Transverse colon (tissue), 4 donors: ENCODE measurements at regions of chr3 and their contacts with region 1.

Region 1: GRCh38 chr3:150183678-150184425 is 213.2 kb upstream of the PFN2 start:
- DNase-seq: peak; percentile 53
- H3K4me3 ChIP-seq: peak overlapping the region in 2 of 4 donors; percentile 10 to 47
- H3K27ac ChIP-seq: no peak overlapping the region
- H3K4me1 ChIP-seq: peaks cover 3 to 28% (median 12%) of the 10 kb centered on the region in 4 donors
- H3K27me3 ChIP-seq: no peaks in the 10 kb centered on the region
- CTCF ChIP-seq: peak; percentile 41 to 53 (median 47)
- EP300 ChIP-seq: no peak
- POLR2A ChIP-seq: no peak

Region 2: GRCh38 chr3:149958171-149958796 is 225.6 kb before region 1 on chr3:
- in situ Hi-C with region 1: loop called in 2 of 4 experiments (anchors 10 to 25 kb)
- intact Hi-C with region 1: no loop called
- DNase-seq: no peak
- H3K4me3 ChIP-seq: no peak overlapping the region
- H3K27ac ChIP-seq: peak overlapping the region in 2 of 4 donors; percentile 4 to 44
- H3K4me1 ChIP-seq: peaks cover 0 to 18% (median 8%) of the 10 kb centered on the region in 4 donors
- H3K27me3 ChIP-seq: no peaks in the 10 kb centered on the region
- CTCF ChIP-seq: no peak
- EP300 ChIP-seq: no peak
- POLR2A ChIP-seq: no peak

Region 3: GRCh38 chr3:149969940-149970715 is 213.7 kb before region 1 on chr3:
- in situ Hi-C with region 1: loop called in 3 of 4 experiments (anchors 25 kb)
- intact Hi-C with region 1: loop called (anchors 2 kb)
- DNase-seq: peak; percentile 92
- H3K4me3 ChIP-seq: peak overlapping the region; percentile 48 to 98 (median 92)
- H3K27ac ChIP-seq: peak overlapping the region; percentile 89 to 98 (median 94)
- H3K4me1 ChIP-seq: peaks cover 0 to 33% (median 22%) of the 10 kb centered on the region in 4 donors
- H3K27me3 ChIP-seq: peaks cover 3% of the 10 kb centered on the region
- CTCF ChIP-seq: no peak
- EP300 ChIP-seq: no peak
- POLR2A ChIP-seq: peak; percentile 7

Region 4: DNA sequence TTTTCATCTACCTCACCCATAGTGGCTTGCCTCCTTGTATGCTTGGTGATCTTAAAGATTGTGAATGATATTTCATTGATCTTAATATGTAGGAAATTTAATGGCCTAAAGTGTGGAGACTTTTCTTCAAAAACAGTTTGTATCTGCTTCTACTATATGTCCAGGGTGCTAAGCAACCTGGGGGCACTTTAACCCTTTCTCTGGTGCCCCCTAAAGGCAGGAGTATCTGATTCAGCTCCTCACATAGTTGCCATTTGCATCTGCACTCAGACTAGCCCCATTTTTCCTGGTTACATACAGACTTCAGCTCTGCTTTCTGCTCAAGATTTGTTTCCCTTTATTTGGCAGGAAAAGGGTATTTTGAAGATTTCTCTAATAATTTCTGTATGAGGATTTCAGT is 207.9 kb before region 1 on chr3:
- in situ Hi-C with region 1: loop called in 3 of 4 experiments (anchors 25 kb)
- intact Hi-C with region 1: no loop called
- DNase-seq: no peak
- H3K4me3 ChIP-seq: no peak overlapping the region
- H3K27ac ChIP-seq: no peak overlapping the region
- H3K4me1 ChIP-seq: peaks cover 0 to 10% (median 6%) of the 10 kb centered on the region in 4 donors
- H3K27me3 ChIP-seq: peaks cover 3% of the 10 kb centered on the region
- CTCF ChIP-seq: no peak
- EP300 ChIP-seq: no peak
- POLR2A ChIP-seq: no peak